Aorta (tissue), 5 donors: ENCODE measurements at regions of chr10 and their contacts with region 1.

Region 1: GRCh38 chr10:76036111-76036940 is 604.9 kb downstream of the LRMDA start:
- DNase-seq: peak; percentile 83 to 91
- ATAC-seq: peak; percentile 90
- H3K4me3 ChIP-seq: peak overlapping the region in 1 of 2 donors; percentile 48
- H3K27ac ChIP-seq: no peak overlapping the region
- H3K4me1 ChIP-seq: no peaks in the 10 kb centered on the region
- H3K27me3 ChIP-seq: no peaks in the 10 kb centered on the region

Region 2: DNA sequence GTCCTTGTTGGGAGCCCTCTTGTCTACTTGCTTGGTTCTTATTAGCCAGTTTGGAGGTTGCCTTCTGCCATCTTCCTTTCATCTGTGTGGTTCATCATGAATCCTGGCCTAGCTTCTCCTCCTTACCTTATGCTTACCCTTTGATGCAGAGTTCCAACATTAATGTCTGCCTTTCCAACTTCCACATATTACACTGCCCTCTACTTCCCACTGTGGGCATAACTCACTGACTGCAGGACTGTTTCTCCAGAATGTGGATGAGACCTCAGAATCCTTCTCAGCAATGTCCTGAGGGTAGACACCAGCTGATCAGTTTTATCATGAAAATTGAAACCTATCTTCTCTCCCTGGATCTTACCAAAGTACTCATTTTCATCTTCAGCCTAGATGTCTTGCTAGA is 113.9 kb before region 1 on chr10:
- intact Hi-C with region 1: loop called in 1 of 2 experiments (anchors 10 kb)
- DNase-seq: no peak
- ATAC-seq: no peak
- H3K4me3 ChIP-seq: no peak overlapping the region
- H3K27ac ChIP-seq: no peak overlapping the region
- H3K4me1 ChIP-seq: no peaks in the 10 kb centered on the region
- H3K27me3 ChIP-seq: no peaks in the 10 kb centered on the region

Region 3: DNA sequence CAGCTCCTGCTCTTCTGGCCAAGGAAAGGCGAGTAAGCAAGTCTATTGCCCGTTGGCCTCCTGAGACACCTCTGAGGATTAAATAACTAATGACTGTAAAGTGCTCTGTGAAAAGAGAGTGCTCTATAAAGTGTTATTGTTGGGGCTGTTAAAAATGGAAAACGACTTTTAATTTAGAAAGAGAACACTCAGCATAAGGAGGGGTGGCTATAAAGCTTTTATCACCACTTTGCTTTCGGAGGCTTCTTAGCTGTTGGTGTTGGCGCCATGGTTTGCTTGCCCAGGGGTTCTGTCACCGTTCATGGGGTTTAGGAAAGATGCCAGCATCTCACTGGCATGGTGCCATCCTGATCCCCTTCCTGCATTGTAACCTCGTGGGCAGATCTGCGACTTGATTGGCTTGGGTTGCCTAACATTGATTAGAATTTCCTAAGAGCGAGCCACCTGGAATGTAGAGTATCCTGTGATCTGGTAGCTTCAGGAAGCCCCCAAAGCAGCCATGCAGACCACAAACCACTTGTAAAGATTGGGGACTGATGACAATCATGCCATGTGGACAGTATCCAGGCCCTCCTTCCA is 95.0 kb before region 1 on chr10:
- intact Hi-C with region 1: no loop called
- DNase-seq: no peak
- ATAC-seq: no peak
- H3K4me3 ChIP-seq: no peak overlapping the region
- H3K27ac ChIP-seq: no peak overlapping the region
- H3K4me1 ChIP-seq: no peaks in the 10 kb centered on the region
- H3K27me3 ChIP-seq: no peaks in the 10 kb centered on the region

Region 4: DNA sequence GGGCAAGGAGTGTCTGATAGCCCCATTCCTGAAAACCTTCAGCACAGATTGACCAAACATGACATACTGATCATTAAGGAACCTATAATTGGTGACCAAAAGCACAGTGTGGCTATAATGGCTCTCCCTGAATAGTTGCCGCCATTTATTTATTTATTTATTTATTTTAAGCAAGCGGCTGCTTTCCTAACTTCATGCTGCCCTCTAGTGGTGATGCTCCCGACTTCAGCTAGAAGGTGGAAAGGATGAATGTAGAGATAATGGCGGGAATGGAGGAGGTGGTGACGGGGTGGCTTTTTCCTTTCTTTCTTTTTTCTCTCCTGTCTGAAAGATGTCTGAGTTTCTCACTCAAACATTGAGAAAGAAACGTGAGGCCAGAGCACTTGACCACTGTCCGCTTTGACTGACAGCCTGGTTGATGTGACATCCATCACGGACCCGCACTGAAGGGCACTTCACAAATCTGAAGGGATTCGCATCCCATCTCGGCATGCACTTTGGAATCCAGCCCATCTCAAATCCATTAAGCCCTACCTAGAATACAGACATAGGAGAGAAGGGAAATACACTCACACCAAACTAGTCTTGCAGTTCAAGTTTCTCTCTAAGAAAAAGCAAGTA is 511.1 kb after region 1 on chr10:
- intact Hi-C with region 1: loop called in 1 of 2 experiments (anchors 10 kb)
- DNase-seq: peak; percentile 83 to 84
- ATAC-seq: peak; percentile 72
- H3K4me3 ChIP-seq: no peak overlapping the region
- H3K27ac ChIP-seq: no peak overlapping the region
- H3K4me1 ChIP-seq: no peaks in the 10 kb centered on the region
- H3K27me3 ChIP-seq: no peaks in the 10 kb centered on the region